MCF 10A (cell line): ENCODE measurements at regions of chr11 and their contacts with region 1.

Region 1: GRCh38 chr11:46616998-46617675 is at the starts of genes ATG13 and HARBI1:
- DNase-seq: peak; percentile 82
- H3K4me3 Mint-ChIP-seq: peak within 1 kb of the TSS; percentile 82
- H3K27ac Mint-ChIP-seq: peak within 1 kb of the TSS; percentile 99
- H3K4me1 Mint-ChIP-seq: peaks cover 19% of the 10 kb centered on the region
- H3K27me3 Mint-ChIP-seq: no peaks in the 10 kb centered on the region
- CTCF ChIP-seq: no peak
- total RNA-seq, gene ATG13: 75.1 and 91.7 TPM in 2 replicates
- total RNA-seq, gene HARBI1: 6.8 and 8.5 TPM in 2 replicates

Region 2: DNA sequence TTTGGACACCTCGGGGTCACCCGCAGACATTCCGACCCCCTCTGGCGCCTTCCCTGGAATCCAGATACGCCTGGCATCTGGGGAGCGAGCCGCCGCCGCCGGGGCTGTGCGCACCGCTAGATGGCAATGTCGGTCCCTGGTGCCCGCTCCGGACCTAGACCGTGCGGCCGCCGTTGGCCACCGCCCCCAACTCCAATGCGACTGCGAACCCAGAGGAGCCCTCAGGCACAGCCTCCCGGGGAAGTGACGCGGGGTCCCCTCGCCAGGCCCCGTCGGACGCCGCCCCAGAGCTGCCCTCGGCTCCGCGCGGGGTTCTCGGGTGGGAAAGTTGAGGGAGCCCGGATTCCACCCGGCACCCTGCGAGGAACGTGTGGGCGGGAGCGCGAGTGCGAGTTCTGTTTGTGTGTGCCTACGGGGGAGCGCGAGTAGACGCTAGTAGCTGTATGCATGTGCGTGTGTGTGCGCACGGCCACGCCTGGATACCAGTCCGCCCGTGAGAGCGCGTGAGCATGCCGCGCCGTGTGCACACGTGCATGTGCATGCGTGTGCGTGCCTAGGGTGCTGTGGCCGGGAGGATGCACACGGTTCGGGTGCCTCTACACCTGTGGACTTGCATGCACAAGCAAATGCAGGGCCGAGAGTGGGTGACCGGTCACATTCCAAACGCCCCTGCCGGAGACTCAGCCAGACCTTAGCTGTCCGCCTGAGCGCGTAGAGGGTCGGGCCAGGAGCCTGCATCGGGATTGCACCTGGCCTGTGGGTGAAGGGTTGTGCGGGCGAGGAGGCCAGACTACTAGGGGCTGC is 227.5 kb before region 1 on chr11:
- CTCF ChIA-PET with region 1: interaction called, 6 read pairs
- POLR2A ChIA-PET with region 1: interaction called, 3 read pairs
- intact Hi-C with region 1: loop called (anchors 1 kb)
- DNase-seq: peak; percentile 70
- H3K4me3 Mint-ChIP-seq: peak overlapping the region; percentile 69
- H3K27ac Mint-ChIP-seq: no peak overlapping the region
- H3K4me1 Mint-ChIP-seq: peaks cover 11% of the 10 kb centered on the region
- H3K27me3 Mint-ChIP-seq: peaks cover 40% of the 10 kb centered on the region
- CTCF ChIP-seq: peak; percentile 88

Region 3: DNA sequence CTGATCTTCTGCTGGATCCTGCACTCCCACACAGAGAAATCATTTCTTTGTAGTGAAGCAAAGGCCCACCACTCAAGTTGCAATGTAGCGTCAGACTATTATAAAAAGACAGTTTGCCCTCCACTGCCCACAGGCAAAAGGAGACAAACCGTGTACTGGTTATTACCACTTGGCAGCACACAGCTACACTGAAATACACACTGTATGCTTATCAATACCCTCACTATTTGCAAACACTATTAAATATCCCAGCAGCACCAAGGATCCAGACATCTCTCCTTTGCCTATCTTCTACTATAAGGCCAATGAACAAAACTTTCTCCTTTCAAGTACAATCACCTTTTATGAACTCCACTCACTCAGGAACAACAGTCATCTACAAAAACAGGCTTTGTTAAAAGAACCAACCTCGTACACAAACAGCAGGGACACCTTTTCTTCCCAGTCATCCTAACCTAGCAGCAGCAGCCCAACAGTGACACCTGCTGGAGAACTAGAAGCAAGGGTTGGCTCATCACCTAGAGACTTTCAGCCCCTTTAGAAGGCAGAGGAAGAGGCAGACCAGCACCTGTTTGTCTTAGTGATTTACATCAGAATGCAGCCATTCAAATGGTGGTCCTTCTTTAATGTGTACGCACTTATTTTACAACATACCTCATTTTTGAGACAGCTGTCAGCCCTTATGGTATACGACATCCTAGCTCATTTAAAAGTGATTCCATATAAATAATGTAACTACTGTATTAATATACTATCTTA is 79.4 kb before region 1 on chr11:
- CTCF ChIA-PET with region 1: interaction called, 7 read pairs
- POLR2A ChIA-PET with region 1: no interaction called
- intact Hi-C with region 1: loop called (anchors 5 kb)
- DNase-seq: peak; percentile 92
- H3K4me3 Mint-ChIP-seq: no peak overlapping the region
- H3K27ac Mint-ChIP-seq: no peak overlapping the region
- H3K4me1 Mint-ChIP-seq: peaks cover 12% of the 10 kb centered on the region
- H3K27me3 Mint-ChIP-seq: no peaks in the 10 kb centered on the region
- CTCF ChIP-seq: peak; percentile 84

Region 4: GRCh38 chr11:46593550-46594373 is 23.4 kb before region 1 on chr11 and contains the start of gene AMBRA1:
- CTCF ChIA-PET with region 1: interaction called, 6 read pairs
- POLR2A ChIA-PET with region 1: interaction called, 22 read pairs
- intact Hi-C with region 1: no loop called
- DNase-seq: peak; percentile 92
- H3K4me3 Mint-ChIP-seq: peak within 1 kb of the TSS; percentile 88
- H3K27ac Mint-ChIP-seq: peak within 1 kb of the TSS; percentile 96
- H3K4me1 Mint-ChIP-seq: peaks cover 17% of the 10 kb centered on the region
- H3K27me3 Mint-ChIP-seq: no peaks in the 10 kb centered on the region
- CTCF ChIP-seq: no peak
- total RNA-seq, gene AMBRA1: 19.6 and 28.5 TPM in 2 replicates

Region 5: DNA sequence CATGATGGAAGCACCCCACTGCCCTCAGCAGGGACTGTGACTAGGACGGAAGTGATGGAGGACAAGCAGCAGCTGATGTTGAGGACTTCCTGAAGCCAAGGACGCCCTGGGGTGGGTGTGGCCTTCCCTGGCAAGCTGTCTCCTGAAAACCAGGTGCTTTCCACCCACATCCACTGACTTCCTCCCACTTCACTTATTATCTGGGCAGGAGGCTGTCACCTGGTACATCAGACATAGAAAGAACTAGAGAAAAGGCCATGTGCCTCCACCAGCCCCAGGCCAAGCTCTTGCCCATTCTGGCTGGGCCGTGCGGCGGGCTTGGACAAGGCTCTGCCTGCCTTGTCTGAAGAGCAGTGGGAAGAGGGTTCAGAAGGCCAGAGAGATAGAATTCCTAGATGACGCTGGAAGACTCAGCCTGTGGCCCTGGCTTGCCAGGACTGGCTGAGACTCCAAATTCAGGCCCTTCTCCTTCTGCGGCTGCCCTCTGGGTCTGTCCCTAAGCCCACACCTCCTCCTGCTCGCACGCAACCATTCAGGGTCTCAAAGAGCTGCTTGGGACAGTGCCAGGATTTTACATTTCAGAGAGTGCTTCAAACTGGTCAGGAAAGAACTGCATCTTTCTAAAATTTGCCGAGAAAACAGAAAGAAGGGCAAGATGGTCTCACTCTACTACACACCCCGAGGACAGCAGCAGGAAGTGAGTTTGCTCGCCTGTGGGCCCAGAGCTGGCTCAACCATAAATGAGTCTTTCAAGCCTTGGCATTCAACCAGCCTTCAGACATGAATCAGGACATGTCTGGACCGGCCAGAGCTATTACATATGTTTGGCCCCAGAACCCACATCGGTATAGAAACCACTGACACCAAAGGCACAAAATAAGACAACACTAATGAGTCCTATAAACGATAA is 70.0 kb after region 1 on chr11:
- CTCF ChIA-PET with region 1: interaction called, 3 read pairs
- POLR2A ChIA-PET with region 1: interaction called, 24 read pairs
- intact Hi-C with region 1: no loop called
- DNase-seq: peak; percentile 95
- H3K4me3 Mint-ChIP-seq: peak overlapping the region; percentile 49
- H3K27ac Mint-ChIP-seq: peak overlapping the region; percentile 96
- H3K4me1 Mint-ChIP-seq: peaks cover 33% of the 10 kb centered on the region
- H3K27me3 Mint-ChIP-seq: no peaks in the 10 kb centered on the region
- CTCF ChIP-seq: no peak

Region 6: GRCh38 chr11:46759196-46759595 is 142.1 kb after region 1 on chr11:
- CTCF ChIA-PET with region 1: no interaction called
- POLR2A ChIA-PET with region 1: no interaction called
- intact Hi-C with region 1: no loop called
- DNase-seq: no peak
- H3K4me3 Mint-ChIP-seq: no peak overlapping the region
- H3K27ac Mint-ChIP-seq: no peak overlapping the region
- H3K4me1 Mint-ChIP-seq: no peaks in the 10 kb centered on the region
- H3K27me3 Mint-ChIP-seq: no peaks in the 10 kb centered on the region
- CTCF ChIP-seq: no peak